PC-3 (cell line): ENCODE measurements at regions of chr11 and their contacts with region 1.

Region 1: DNA sequence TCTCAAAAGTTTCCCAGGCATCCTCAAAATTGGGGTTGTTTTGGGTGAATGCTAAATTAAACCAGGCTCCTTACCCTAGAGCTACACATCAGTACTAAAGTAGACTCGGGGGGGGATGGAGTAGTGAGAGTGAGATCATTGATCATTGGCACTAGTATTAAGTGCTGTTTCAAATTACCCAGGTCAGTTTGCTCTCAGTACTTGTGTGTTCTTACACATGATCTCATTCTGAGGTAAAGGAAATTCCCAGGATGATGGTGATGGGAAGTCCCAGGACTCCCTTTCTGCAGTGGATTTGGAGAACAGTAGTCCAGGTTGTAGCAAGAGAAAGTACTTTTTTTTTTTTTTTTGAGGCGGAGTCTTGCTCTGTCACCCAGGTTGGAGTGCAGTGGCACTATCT is 12.5 kb downstream of the RBM4 start:
- DNase-seq: no peak
- ATAC-seq: 0 out of 2 replicates have a peak, but pooled peaks have one; percentile 8
- H3K4me3 ChIP-seq: no peak overlapping the region
- H3K27ac ChIP-seq: no peak overlapping the region
- H3K4me1 ChIP-seq: no peaks in the 10 kb centered on the region
- H3K27me3 ChIP-seq: no peaks in the 10 kb centered on the region
- CTCF ChIP-seq: no peak

Region 2: GRCh38 chr11:66579017-66579606 is 71.9 kb before region 1 on chr11:
- CTCF ChIA-PET with region 1: no interaction called
- POLR2A ChIA-PET with region 1: no interaction called
- intact Hi-C with region 1: no loop called
- DNase-seq: peak; percentile 74
- ATAC-seq: peak; percentile 82
- H3K4me3 ChIP-seq: no peak overlapping the region
- H3K27ac ChIP-seq: no peak overlapping the region
- H3K4me1 ChIP-seq: no peaks in the 10 kb centered on the region
- H3K27me3 ChIP-seq: no peaks in the 10 kb centered on the region
- CTCF ChIP-seq: peak; percentile 90

Region 3: DNA sequence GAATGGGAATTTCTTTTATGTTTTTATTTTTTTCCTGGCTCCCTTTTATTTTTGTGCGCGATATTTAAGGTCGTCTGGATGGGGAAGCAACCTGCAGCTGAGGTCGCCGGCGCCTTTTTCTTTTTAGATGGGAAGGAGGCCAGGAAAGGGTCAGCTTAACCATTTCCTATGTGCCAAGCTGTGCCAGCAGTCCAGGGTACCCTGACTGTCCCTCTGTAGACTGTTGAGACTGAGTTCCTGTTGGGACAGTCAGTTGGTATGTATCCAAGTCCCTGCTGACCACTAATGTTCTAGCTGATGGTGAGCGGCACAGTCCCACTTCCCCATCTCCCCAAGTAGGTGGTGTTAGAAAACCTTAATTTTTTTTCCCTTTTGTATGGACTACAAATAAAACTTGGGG is 24.1 kb before region 1 on chr11:
- CTCF ChIA-PET with region 1: no interaction called
- POLR2A ChIA-PET with region 1: interaction called, 12 read pairs
- intact Hi-C with region 1: no loop called
- DNase-seq: no peak
- ATAC-seq: no peak
- H3K4me3 ChIP-seq: no peak overlapping the region
- H3K27ac ChIP-seq: no peak overlapping the region
- H3K4me1 ChIP-seq: no peaks in the 10 kb centered on the region
- H3K27me3 ChIP-seq: no peaks in the 10 kb centered on the region
- CTCF ChIP-seq: no peak

Region 4: DNA sequence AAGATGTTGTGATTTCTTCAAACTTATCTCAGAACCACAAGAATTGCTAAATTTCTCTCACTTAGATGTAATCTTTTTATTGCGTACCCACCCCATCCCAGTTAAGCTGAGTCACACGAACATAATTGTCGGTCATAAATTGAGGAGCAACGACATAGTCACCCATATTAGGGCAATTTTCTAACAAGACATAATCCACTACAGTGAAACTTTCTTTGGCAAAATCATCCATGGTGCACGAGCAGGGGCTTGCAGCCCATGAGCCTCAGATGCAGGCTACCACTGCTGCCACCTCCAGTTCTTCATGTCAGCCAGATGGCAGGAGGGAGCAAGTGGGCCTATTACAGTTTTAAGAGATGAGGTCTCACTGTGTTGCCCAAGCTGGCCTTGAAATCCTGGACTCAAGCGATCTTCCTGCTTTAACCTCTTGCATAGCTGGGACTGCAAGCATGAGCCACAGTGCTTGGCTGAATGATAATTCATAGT is 545.0 kb after region 1 on chr11:
- CTCF ChIA-PET with region 1: no interaction called
- POLR2A ChIA-PET with region 1: no interaction called
- intact Hi-C with region 1: no loop called
- DNase-seq: peak; percentile 84
- ATAC-seq: peak; percentile 91
- H3K4me3 ChIP-seq: 0 out of 2 replicates have a peak overlapping the region, but pooled peaks have one; percentile 6
- H3K27ac ChIP-seq: peak overlapping the region; percentile 49
- H3K4me1 ChIP-seq: peaks cover 23% of the 10 kb centered on the region
- H3K27me3 ChIP-seq: no peaks in the 10 kb centered on the region
- CTCF ChIP-seq: peak; percentile 33; the same call in 1 of the 2 replicates